K562 (cell line): ENCODE measurements at regions of chr15 and their contacts with region 1.

Region 1: GRCh38 chr15:43204016-43204901 is 16.6 kb downstream of the EPB42 start:
- DNase-seq: peak; percentile 60 to 68 (median 64)
- ATAC-seq: peak; percentile 86
- H3K4me3 ChIP-seq: no peak overlapping the region
- H3K27ac ChIP-seq: no peak overlapping the region
- H3K4me1 ChIP-seq: peaks cover 0 to 6% of the 10 kb centered on the region in 2 experiments; a peak in 2 of 5 replicates
- H3K27me3 ChIP-seq: peaks cover 0 to 8% of the 10 kb centered on the region in 2 experiments; a peak in 1 of 5 replicates
- CTCF ChIP-seq: peak; percentile 78 to 80 (median 78)
- EP300 ChIP-seq: no peak
- POLR2A ChIP-seq: no peak
- RAD21 ChIP-seq: peak; percentile 40 to 66; a peak in 3 of 4 replicates

Region 2: DNA sequence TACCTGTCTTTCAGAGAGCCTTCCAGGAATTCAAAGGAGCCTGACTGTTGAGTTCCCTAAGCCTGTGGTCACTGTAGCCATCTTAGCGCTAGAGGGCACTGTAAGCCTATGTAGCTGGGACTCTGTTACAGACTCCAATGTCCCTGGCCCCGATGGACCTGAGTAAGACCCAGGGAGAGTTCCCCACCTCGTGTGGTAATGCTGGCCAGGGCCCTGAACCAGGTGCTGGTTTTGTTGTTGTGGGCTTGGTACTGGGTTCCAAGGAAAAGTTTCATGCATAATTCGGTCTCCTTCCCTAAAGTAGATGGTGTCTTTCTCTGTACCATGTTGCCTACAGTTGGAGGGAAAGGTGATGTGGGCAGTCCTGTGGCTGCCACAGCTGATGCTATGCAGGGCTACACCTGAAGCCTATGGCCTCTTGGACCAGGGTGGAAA is 499.8 kb before region 1 on chr15:
- CTCF ChIA-PET with region 1: interaction called, 9 read pairs
- POLR2A ChIA-PET with region 1: no interaction called
- in situ Hi-C with region 1: no loop called
- intact Hi-C with region 1: loop called (anchors 1 kb)
- DNase-seq: peak; percentile 69 to 82 (median 76)
- ATAC-seq: peak; percentile 100
- H3K4me3 ChIP-seq: no peak overlapping the region
- H3K27ac ChIP-seq: no peak overlapping the region
- H3K4me1 ChIP-seq: no peaks in the 10 kb centered on the region
- H3K27me3 ChIP-seq: no peaks in the 10 kb centered on the region
- CTCF ChIP-seq: peak; percentile 90 to 94 (median 90)
- EP300 ChIP-seq: no peak
- POLR2A ChIP-seq: no peak
- RAD21 ChIP-seq: peak; percentile 82 to 88

Region 3: GRCh38 chr15:42710662-42711061 is 493.6 kb before region 1 on chr15:
- CTCF ChIA-PET with region 1: no interaction called
- POLR2A ChIA-PET with region 1: interaction called, 3 read pairs
- in situ Hi-C with region 1: loop called (anchors 5 kb)
- intact Hi-C with region 1: no loop called
- DNase-seq: no peak
- ATAC-seq: no peak
- H3K4me3 ChIP-seq: no peak overlapping the region
- H3K27ac ChIP-seq: no peak overlapping the region
- H3K4me1 ChIP-seq: no peaks in the 10 kb centered on the region
- H3K27me3 ChIP-seq: no peaks in the 10 kb centered on the region
- CTCF ChIP-seq: no peak
- EP300 ChIP-seq: no peak
- POLR2A ChIP-seq: no peak
- RAD21 ChIP-seq: no peak

Region 4: GRCh38 chr15:43105778-43106485 is 98.3 kb before region 1 on chr15 and contains the start of gene UBR1:
- CTCF ChIA-PET with region 1: no interaction called
- POLR2A ChIA-PET with region 1: no interaction called
- in situ Hi-C with region 1: no loop called
- intact Hi-C with region 1: no loop called
- DNase-seq: peak; percentile 87 to 96 (median 91)
- ATAC-seq: peak; percentile 91
- H3K4me3 ChIP-seq: peak within 1 kb of the TSS; percentile 69
- H3K27ac ChIP-seq: peak within 1 kb of the TSS; percentile 89
- H3K4me1 ChIP-seq: peaks cover 0 to 25% of the 10 kb centered on the region in 2 experiments; a peak in 3 of 5 replicates
- H3K27me3 ChIP-seq: no peaks in the 10 kb centered on the region
- CTCF ChIP-seq: no peak
- EP300 ChIP-seq: 0 out of 2 replicates have a peak, but pooled peaks have one; percentile 6
- POLR2A ChIP-seq: peak; percentile 92
- RAD21 ChIP-seq: no peak
- polyA plus RNA-seq, gene UBR1: 5.8 to 7.1 TPM

Region 5: GRCh38 chr15:43225201-43225949 is 21.1 kb after region 1 on chr15:
- CTCF ChIA-PET with region 1: no interaction called
- POLR2A ChIA-PET with region 1: interaction called, 6 read pairs
- in situ Hi-C with region 1: no loop called
- intact Hi-C with region 1: loop called (anchors 2 kb)
- DNase-seq: peak in 2 of 4 experiments; percentile 56 to 78
- ATAC-seq: peak; percentile 84
- H3K4me3 ChIP-seq: no peak overlapping the region
- H3K27ac ChIP-seq: no peak overlapping the region
- H3K4me1 ChIP-seq: peaks cover 14 to 27% of the 10 kb centered on the region in 2 experiments; a peak in 4 of 5 replicates
- H3K27me3 ChIP-seq: no peaks in the 10 kb centered on the region
- CTCF ChIP-seq: peak; percentile 70 to 82 (median 81)
- EP300 ChIP-seq: no peak
- POLR2A ChIP-seq: no peak
- RAD21 ChIP-seq: peak; percentile 81 to 95

Region 6: DNA sequence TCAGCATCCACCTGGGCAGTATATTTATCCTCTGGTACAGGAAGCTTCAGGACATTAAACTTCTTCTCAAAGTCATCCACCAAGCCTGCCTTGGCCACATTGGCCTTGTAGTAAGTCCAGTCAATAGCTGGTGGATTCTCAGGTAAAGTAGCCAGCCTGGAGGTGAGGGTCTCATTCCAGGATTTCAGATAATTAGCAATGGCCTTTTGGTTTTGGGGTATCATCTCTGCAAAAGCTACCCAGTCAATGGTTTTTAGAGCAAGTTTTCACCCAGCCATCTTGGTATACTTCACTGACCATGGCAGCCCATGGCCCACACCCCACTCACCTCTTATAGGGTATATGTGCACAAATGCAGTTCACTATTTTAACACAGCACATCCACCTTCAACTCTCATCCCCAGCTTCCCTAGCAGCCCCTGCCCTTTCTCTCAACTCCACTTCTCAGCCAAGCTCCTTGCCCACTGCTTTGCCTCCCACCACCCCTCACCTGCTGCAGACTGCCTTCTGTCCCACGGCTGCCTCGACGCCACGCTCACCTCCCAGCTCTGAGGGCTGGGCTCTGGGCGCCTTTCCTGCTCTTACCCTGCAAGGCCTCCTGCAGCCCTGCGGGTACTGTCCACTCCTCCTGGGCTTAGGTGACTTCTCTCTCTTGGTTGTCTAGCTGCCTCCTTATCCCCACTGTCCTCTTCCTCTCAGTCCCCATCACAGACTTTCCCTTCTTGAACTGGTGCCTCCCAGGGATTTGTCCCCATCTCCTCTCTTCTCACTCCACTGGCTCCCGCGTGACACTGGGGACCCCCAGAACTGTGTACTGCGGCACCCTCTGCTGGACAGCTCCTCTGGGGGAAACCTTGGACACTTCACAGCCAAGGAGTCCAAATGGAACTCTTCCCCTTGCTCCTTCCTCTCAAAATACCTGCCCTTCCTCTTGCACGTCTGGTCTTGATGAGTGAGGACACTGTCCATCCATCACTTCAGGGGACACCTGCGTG is 64.1 kb after region 1 on chr15:
- CTCF ChIA-PET with region 1: interaction called, 4 read pairs
- POLR2A ChIA-PET with region 1: no interaction called
- in situ Hi-C with region 1: no loop called
- intact Hi-C with region 1: loop called (anchors 2 kb)
- DNase-seq: peak in 2 of 4 experiments; percentile 49 to 64
- ATAC-seq: peak; percentile 93
- H3K4me3 ChIP-seq: no peak overlapping the region
- H3K27ac ChIP-seq: no peak overlapping the region
- H3K4me1 ChIP-seq: peaks cover 0 to 7% of the 10 kb centered on the region in 2 experiments; a peak in 1 of 5 replicates
- H3K27me3 ChIP-seq: peaks cover 13 to 32% of the 10 kb centered on the region in 2 experiments; a peak in 4 of 5 replicates
- CTCF ChIP-seq: peak; percentile 71 to 78 (median 75)
- EP300 ChIP-seq: no peak
- POLR2A ChIP-seq: no peak
- RAD21 ChIP-seq: peak; percentile 73 to 89

Region 7: GRCh38 chr15:43275740-43276562 is 71.7 kb after region 1 on chr15:
- CTCF ChIA-PET with region 1: no interaction called
- POLR2A ChIA-PET with region 1: interaction called, 3 read pairs
- in situ Hi-C with region 1: loop called (anchors 5 kb)
- intact Hi-C with region 1: no loop called
- DNase-seq: no peak
- ATAC-seq: no peak
- H3K4me3 ChIP-seq: no peak overlapping the region
- H3K27ac ChIP-seq: no peak overlapping the region
- H3K4me1 ChIP-seq: no peaks in the 10 kb centered on the region
- H3K27me3 ChIP-seq: peaks cover 45 to 66% of the 10 kb centered on the region in 2 experiments; a peak in 4 of 5 replicates
- CTCF ChIP-seq: no peak
- EP300 ChIP-seq: no peak
- POLR2A ChIP-seq: no peak
- RAD21 ChIP-seq: no peak

Region 8: GRCh38 chr15:43285609-43286037 is 81.4 kb after region 1 on chr15:
- CTCF ChIA-PET with region 1: interaction called, 12 read pairs
- POLR2A ChIA-PET with region 1: interaction called, 4 read pairs
- in situ Hi-C with region 1: no loop called
- intact Hi-C with region 1: loop called (anchors 1 kb)
- DNase-seq: peak; percentile 69 to 81 (median 72)
- ATAC-seq: peak; percentile 87
- H3K4me3 ChIP-seq: no peak overlapping the region
- H3K27ac ChIP-seq: no peak overlapping the region
- H3K4me1 ChIP-seq: no peaks in the 10 kb centered on the region; a peak in 1 of 5 replicates
- H3K27me3 ChIP-seq: peaks cover 25 to 38% of the 10 kb centered on the region in 2 experiments
- CTCF ChIP-seq: peak; percentile 81 to 97 (median 90)
- EP300 ChIP-seq: 0 out of 2 replicates have a peak, but pooled peaks have one; percentile 19
- POLR2A ChIP-seq: no peak
- RAD21 ChIP-seq: peak; percentile 91 to 99

Region 9: GRCh38 chr15:43867096-43867495 is 662.8 kb after region 1 on chr15:
- CTCF ChIA-PET with region 1: no interaction called
- POLR2A ChIA-PET with region 1: no interaction called
- in situ Hi-C with region 1: no loop called
- intact Hi-C with region 1: no loop called
- DNase-seq: no peak
- ATAC-seq: no peak
- H3K4me3 ChIP-seq: no peak overlapping the region
- H3K27ac ChIP-seq: no peak overlapping the region
- H3K4me1 ChIP-seq: no peaks in the 10 kb centered on the region
- H3K27me3 ChIP-seq: no peaks in the 10 kb centered on the region
- CTCF ChIP-seq: no peak
- EP300 ChIP-seq: no peak
- POLR2A ChIP-seq: no peak
- RAD21 ChIP-seq: no peak